ENCODE measurements at regions of chr3 and their contacts with region 1.

Region 1: DNA sequence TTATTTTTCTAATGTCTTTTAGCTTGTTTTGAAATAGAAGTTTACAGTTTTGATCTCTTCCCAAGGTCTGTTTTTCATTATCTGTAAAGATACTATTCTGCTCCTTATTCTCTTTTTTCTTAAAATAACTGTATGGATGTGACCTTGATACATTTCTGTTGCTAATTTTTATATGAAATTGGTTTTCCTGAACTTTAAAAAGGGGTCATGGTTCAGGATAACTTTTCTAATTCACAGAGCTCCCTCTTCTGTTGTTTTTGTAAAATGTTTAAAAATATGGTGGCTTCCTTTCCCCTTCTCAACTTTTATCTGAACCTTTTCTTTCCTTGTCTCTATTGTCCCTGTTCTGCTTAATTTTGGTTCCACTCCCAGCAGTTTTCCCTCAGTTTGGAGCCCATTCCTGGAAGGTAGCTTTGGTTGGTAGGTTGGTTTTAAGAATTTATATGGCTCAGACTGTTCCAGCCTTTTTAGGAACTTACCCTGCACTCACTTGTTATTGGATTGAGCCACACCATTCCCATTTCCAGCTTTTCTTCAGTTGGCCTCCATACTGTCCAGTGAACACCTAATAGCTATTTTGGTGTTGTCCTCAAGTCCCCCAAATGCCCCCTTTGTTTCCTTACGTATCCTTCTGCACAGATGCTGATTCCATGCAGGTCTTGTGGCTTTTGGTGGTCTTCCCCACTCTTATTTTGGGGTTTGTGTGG is 70.3 kb downstream of the SLMAP start:
- DNase-seq: no peak
- ATAC-seq: peak; percentile 37

Region 2: GRCh38 chr3:57315696-57316095 is 510.7 kb before region 1 on chr3:
- intact Hi-C with region 1: no loop called
- DNase-seq: no peak
- ATAC-seq: no peak

Region 3: DNA sequence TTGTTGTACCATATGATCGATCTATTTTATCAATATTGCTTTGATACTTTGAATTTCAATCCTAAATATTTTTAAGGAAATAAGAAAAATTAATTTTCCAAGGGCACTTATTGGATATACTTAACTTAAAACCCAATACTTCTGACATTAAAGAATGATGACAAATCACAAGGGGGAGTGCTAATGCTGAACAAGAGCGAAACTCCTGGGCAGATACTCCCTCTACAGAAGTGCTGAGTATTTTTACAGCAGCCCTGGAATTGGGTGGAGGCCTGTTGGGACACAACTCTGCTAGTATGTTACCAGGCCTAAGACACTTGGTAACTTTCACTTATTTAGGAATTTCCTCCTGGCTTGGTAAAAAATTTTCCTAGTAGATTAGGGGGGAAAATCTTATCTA is 179.7 kb before region 1 on chr3:
- intact Hi-C with region 1: loop called (anchors 10 kb)
- DNase-seq: no peak
- ATAC-seq: peak; percentile 94